ENCODE measurements at regions of chr1 and their contacts with region 1.

Region 1: GRCh38 chr1:114670083-114671010 is 498 bp upstream of the DENND2C start:
- DNase-seq: peak; percentile 95 to 97
- ATAC-seq: peak; percentile 74 to 78
- H3K4me3 ChIP-seq: peak overlapping the region; percentile 65 to 93 (median 91)
- H3K27ac ChIP-seq: peak overlapping the region; percentile 89 to 100 (median 96)
- H3K4me1 ChIP-seq: peaks cover 15 to 40% of the 10 kb centered on the region in 2 donors
- H3K27me3 ChIP-seq: no peaks in the 10 kb centered on the region
- CTCF ChIP-seq: peak in 2 of 5 experiments; percentile 15 to 49
- POLR2A ChIP-seq: peak; percentile 86 to 95

Region 2: DNA sequence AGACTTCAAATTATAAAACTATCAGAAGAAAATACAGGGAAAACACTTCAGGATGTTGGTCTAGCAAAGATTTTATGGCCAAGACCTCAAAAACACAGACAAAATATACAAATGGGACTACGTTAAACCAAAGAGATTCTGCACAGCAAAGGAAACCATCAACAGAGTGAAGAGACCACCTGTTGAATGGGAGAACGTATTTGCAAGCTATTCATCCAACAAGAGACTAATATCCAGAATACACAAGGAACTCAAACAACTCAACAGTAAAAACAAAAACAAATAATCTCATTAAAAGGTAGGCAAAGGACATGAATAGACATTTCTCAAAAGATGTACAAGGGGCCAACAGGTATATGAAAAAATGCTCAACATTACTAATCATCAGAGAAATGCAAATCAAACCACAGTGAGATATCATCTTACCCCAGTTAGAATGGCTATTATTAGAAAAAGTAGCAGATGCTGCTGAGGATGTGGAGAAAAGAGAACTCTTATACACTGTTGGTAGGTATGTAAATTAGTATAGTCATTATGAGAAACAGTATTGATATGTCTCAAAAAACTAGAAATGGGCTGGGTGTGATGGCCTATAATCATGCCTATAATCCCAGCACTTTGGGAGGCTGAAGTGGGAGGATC is 1484.8 kb before region 1 on chr1:
- in situ Hi-C with region 1: no loop called
- intact Hi-C with region 1: no loop called
- DNase-seq: no peak
- ATAC-seq: no peak
- H3K4me3 ChIP-seq: no peak overlapping the region
- H3K27ac ChIP-seq: no peak overlapping the region
- H3K4me1 ChIP-seq: no peaks in the 10 kb centered on the region
- H3K27me3 ChIP-seq: no peaks in the 10 kb centered on the region
- CTCF ChIP-seq: no peak
- POLR2A ChIP-seq: no peak

Region 3: DNA sequence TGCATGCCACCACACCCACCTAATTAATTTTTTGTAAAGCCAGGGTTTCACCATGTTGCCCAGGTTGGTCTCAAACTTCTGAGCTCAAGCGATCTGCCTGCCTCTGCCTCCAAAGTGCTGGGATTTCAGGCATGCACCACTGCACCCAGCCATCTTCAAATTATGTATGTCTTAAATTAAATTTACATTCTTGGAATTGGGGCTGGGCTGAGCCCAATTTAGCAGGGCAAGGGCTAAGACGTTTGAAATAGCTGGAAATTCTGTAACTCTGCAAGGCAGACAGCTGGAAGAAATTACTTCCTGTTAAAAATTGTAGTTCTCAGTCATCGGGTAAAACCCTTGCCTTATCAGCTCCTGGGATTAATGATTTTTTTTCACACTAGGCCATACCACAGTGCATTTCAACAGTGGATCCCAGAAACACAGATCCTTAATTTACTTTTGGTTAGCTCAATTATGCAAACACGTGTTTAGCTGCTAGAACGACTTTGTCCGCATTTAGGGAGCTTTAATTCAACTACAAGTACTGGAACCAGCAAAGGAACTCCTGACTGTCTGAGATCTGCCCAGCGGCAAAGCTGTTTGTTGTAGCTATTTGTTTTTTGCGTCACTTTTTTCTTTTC is 607.8 kb before region 1 on chr1:
- in situ Hi-C with region 1: no loop called
- intact Hi-C with region 1: no loop called
- DNase-seq: no peak
- ATAC-seq: no peak
- H3K4me3 ChIP-seq: no peak overlapping the region
- H3K27ac ChIP-seq: no peak overlapping the region
- H3K4me1 ChIP-seq: no peaks in the 10 kb centered on the region
- H3K27me3 ChIP-seq: no peaks in the 10 kb centered on the region
- CTCF ChIP-seq: no peak
- POLR2A ChIP-seq: no peak

Region 4: DNA sequence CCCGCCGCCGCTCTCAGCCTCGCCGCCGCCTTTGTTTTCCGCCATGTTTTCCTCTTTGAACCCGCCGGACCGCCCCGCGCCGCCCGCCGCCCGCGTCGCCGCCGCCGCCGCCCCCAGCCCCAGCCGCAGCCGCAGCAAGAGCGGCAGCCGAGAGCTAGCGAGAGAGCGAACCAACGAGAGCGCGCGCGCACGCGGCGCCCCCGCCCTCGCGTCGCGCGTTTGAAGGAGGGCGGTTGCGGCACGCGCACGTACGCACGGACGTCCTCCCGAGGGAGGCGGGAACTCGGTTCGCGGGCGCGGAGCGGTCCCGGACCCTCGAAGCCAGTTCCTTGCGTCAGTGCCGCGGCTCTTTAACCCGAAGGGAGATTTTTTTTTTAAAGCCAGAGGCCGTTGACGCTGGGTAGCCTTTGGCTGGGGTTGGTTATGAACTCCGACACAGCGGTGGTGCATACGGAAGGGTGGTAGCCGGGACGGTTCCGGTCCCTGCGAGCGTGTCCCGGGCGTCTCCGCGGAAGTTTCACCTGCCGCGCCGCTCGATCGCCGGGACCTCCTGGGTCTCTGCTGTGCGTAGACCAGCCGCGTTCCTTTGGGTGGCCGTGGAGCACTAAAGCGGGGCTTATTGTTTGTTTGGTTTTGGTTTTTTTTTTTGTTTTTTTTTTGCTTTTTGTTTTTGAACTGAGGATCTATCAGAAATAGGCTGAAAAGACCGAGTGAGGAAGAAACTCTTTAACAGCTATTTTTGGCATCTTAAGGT is 159.1 kb before region 1 on chr1 and contains the start of gene TRIM33:
- in situ Hi-C with region 1: no loop called
- intact Hi-C with region 1: loop called (anchors 2 kb)
- DNase-seq: peak; percentile 81 to 91
- ATAC-seq: peak; percentile 86 to 87
- H3K4me3 ChIP-seq: peak within 1 kb of the TSS; percentile 69 to 100 (median 90)
- H3K27ac ChIP-seq: peak within 1 kb of the TSS; percentile 88 to 99 (median 96)
- H3K4me1 ChIP-seq: peaks cover 41 to 42% of the 10 kb centered on the region in 2 donors
- H3K27me3 ChIP-seq: no peaks in the 10 kb centered on the region
- CTCF ChIP-seq: peak in 1 of 5 experiments; percentile 18
- POLR2A ChIP-seq: peak; percentile 87 to 90
- total RNA-seq, gene TRIM33: 17.1 to 33.0 (median 25.3) TPM

Region 5: DNA sequence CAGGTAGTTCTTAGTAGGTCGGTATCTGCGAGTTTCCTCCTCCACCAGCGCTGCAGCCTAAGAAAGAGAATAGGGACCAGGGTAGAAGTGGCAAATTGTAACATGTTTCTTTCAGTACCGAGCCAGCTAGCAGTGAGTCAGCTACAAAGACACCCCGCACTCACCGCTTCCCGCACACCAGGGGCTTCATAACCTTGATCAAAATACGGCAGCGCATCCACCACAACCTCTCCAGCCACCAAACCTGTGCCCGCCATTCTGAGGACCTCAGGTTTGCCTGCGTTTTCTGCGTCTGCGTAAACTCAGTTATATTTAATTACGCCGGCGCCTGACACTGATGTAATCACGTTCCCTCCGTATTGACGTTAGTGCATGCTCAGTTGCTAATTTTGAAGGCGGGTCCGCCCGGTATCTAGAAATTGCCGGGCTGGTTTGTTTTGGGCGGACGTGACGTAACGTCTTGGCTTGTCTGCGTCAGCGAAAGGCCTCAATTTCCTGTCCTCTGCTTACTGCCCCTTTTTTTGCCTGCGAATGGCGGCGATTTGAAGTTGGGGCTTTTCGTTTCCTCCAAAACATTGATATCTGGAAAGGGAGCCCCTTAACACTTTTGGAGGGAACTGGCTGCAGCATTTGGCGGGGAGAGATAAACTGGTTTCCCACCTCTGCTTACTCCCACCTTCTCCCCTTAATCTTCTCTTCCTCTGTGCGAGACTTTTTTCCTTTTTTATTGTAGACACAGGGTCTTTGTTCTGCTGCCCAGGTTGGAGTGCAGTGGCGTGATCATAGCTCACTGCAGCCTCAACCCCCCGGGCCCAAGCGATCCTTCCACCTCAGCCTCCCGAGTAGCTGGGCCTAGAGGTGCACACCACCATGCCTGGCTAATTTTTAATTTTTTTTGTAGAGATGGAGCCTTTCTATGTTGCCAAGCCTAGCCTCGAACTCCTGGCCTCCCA is 88.7 kb before region 1 on chr1 and contains the start of gene BCAS2:
- in situ Hi-C with region 1: no loop called
- intact Hi-C with region 1: loop called (anchors 5 kb)
- DNase-seq: peak; percentile 95 to 97
- ATAC-seq: peak; percentile 99
- H3K4me3 ChIP-seq: peak within 1 kb of the TSS; percentile 64 to 75 (median 70)
- H3K27ac ChIP-seq: peak within 1 kb of the TSS; percentile 87 to 95 (median 92)
- H3K4me1 ChIP-seq: peaks cover 16 to 25% of the 10 kb centered on the region in 2 donors
- H3K27me3 ChIP-seq: no peaks in the 10 kb centered on the region
- CTCF ChIP-seq: no peak
- POLR2A ChIP-seq: peak; percentile 88 to 89
- total RNA-seq, gene BCAS2: 23.7 to 32.8 (median 25.2) TPM

Region 6: DNA sequence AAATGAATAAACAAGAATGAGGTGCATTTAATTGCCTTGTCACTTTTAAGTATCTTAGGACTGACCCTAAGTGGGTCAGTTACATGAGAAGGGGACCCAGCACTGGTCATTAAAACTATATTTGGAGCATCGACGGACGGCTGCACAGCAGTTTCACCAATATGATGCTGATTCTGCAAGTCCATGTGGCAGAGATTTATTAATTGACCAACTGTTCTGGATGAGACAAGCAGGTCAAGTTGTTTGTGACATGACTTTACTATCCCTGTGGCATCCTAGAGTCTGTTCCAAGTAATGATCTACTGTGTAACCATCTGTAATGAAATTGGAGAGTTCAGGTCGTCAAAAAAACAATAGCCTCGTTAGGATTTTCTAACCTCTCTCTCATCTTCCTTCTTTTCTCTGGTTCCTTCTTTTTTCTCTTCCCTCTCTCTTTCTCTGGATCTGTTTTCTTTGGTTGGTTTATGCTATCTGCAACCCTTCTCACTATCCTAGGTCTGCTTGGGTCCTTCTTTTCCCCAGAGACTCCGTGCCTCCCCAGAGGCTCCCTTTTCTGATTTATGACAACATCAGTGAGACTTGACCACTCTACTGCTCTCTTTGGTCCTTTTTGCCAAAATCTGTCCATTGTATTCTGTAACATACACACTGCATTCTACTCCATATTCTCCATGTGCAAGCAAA is 15.6 kb after region 1 on chr1:
- in situ Hi-C with region 1: no loop called
- intact Hi-C with region 1: loop called (anchors 2 kb)
- DNase-seq: no peak
- ATAC-seq: peak; percentile 41 to 82
- H3K4me3 ChIP-seq: no peak overlapping the region
- H3K27ac ChIP-seq: peak overlapping the region; percentile 88 to 98 (median 91)
- H3K4me1 ChIP-seq: peaks cover 63 to 70% of the 10 kb centered on the region in 2 donors
- H3K27me3 ChIP-seq: no peaks in the 10 kb centered on the region
- CTCF ChIP-seq: no peak
- POLR2A ChIP-seq: no peak

Region 7: GRCh38 chr1:114745291-114745690 is 74.9 kb after region 1 on chr1:
- in situ Hi-C with region 1: loop called in 2 of 4 experiments (anchors 5 to 10 kb)
- intact Hi-C with region 1: no loop called
- DNase-seq: no peak
- ATAC-seq: peak; percentile 26 to 39
- H3K4me3 ChIP-seq: no peak overlapping the region
- H3K27ac ChIP-seq: peak overlapping the region; percentile 97 to 100 (median 98)
- H3K4me1 ChIP-seq: peaks cover 91 to 100% of the 10 kb centered on the region in 2 donors
- H3K27me3 ChIP-seq: no peaks in the 10 kb centered on the region
- CTCF ChIP-seq: no peak
- POLR2A ChIP-seq: no peak

Region 8: DNA sequence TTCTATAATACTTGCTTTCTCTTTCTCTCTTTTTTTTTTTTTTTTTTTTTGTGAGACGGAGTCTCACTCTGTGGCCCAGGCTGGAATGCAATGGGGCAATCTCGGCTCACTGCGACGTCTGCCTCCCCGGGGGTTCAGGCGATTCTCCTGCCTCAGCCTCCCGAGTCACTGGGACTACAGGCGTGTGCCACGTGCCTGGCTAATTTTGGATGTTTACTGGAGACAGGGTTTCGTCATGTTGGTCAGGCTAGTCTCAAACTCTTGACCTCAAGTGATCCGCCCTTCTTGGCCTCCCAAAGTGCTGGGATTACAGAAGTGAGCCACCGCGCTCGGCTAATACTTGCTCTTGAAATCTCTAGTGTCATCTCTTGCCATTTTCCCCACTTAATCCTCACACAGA is 183.2 kb after region 1 on chr1:
- in situ Hi-C with region 1: no loop called
- intact Hi-C with region 1: no loop called
- DNase-seq: no peak
- ATAC-seq: no peak
- H3K4me3 ChIP-seq: no peak overlapping the region
- H3K27ac ChIP-seq: no peak overlapping the region
- H3K4me1 ChIP-seq: no peaks in the 10 kb centered on the region
- H3K27me3 ChIP-seq: peaks cover 16 to 27% (median 18%) of the 10 kb centered on the region in 3 donors
- CTCF ChIP-seq: no peak
- POLR2A ChIP-seq: no peak

Region 9: GRCh38 chr1:115753830-115754229 is 1083.5 kb after region 1 on chr1:
- in situ Hi-C with region 1: no loop called
- intact Hi-C with region 1: loop called (anchors 10 kb)
- DNase-seq: peak; percentile 94
- ATAC-seq: peak; percentile 89 to 90
- H3K4me3 ChIP-seq: peak overlapping the region in 2 of 4 donors; percentile 3 to 13
- H3K27ac ChIP-seq: peak overlapping the region; percentile 87 to 91 (median 90)
- H3K4me1 ChIP-seq: peaks cover 65 to 78% of the 10 kb centered on the region in 2 donors
- H3K27me3 ChIP-seq: no peaks in the 10 kb centered on the region
- CTCF ChIP-seq: no peak
- POLR2A ChIP-seq: peak in 1 of 2 donors; percentile 42

Measured in gastrocnemius medialis (tissue), 4 donors.